ENCODE measurements at regions of chr22 and their contacts with region 1.

Region 1: DNA sequence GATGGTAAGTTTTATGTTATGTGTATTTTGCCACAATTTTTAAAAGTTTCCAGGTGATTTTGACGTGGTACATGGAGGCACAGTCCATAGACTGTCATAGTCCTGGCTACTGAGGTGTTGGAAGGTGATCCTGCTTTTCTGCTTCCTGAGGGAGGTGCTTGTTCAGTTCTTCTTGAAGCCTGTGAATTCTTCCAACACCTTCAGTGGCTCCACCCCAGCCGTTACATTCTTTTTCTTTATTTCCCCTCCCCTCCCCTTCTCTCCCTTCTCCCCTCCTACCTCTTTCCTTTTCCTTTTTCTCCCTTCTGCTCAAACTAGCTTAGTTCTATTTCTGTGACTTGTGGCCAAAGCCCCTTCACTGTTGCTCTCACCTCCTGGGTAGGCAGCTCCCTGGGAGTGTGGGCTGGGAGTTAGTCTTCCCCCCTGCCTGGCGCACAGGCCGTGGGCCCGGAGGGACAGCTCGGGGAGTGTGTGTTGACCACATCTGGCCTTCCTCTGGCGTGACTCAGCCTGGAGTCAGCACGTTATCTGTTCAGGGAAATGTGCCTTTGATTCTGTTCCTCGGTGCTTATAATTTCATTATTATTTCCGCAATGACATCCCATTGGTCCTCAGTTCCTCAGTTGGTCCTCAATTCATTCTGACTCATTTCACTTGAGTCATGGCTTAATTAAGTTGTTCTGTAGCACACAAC is 566.2 kb downstream of the TBC1D22A start:
- DNase-seq: peak; percentile 82
- H3K4me3 Mint-ChIP-seq: peak overlapping the region; percentile 36
- H3K27ac Mint-ChIP-seq: peak overlapping the region; percentile 46
- H3K4me1 Mint-ChIP-seq: peaks cover 42% of the 10 kb centered on the region
- H3K27me3 Mint-ChIP-seq: no peaks in the 10 kb centered on the region
- CTCF ChIP-seq: no peak

Region 2: DNA sequence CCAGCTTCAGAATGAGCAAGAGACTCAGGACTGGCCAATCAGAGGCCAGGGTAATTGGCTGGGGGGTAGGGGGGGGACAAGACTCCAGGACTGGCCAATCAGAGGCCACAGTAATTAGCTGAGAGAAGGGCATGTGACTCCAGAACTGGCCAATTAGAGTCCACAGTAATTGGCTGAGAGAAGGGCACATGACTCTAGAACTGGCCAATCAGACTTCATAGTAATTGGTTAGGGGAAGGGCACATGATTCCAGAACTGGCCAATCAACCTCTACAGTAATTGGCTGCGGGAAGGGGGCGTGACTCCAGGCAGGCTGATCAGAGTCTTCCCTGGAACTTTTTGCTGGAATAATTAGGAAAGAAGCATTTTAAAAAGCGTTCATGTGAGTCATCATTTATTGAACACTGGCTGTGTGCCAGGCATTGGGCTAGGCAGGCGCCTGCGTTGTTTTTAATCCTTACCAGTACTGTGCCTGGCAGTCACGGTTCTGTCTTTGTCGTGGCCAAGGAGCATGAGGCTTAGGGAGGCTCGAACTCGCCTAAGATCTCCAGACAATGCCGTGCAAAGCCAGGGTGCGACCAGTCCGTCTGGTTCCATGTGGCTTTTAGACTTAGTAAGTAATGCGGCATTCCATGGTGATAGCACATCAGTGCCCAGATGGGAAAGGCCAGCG is 58.1 kb before region 1 on chr22:
- CTCF ChIA-PET with region 1: interaction called, 10 read pairs
- intact Hi-C with region 1: no loop called
- DNase-seq: peak; percentile 56
- H3K4me3 Mint-ChIP-seq: no peak overlapping the region
- H3K27ac Mint-ChIP-seq: no peak overlapping the region
- H3K4me1 Mint-ChIP-seq: no peaks in the 10 kb centered on the region
- H3K27me3 Mint-ChIP-seq: peaks cover 19% of the 10 kb centered on the region
- CTCF ChIP-seq: no peak